CD8-positive, alpha-beta T cell (primary cell): ENCODE measurements at regions of chr16 and their contacts with region 1.

Region 1: DNA sequence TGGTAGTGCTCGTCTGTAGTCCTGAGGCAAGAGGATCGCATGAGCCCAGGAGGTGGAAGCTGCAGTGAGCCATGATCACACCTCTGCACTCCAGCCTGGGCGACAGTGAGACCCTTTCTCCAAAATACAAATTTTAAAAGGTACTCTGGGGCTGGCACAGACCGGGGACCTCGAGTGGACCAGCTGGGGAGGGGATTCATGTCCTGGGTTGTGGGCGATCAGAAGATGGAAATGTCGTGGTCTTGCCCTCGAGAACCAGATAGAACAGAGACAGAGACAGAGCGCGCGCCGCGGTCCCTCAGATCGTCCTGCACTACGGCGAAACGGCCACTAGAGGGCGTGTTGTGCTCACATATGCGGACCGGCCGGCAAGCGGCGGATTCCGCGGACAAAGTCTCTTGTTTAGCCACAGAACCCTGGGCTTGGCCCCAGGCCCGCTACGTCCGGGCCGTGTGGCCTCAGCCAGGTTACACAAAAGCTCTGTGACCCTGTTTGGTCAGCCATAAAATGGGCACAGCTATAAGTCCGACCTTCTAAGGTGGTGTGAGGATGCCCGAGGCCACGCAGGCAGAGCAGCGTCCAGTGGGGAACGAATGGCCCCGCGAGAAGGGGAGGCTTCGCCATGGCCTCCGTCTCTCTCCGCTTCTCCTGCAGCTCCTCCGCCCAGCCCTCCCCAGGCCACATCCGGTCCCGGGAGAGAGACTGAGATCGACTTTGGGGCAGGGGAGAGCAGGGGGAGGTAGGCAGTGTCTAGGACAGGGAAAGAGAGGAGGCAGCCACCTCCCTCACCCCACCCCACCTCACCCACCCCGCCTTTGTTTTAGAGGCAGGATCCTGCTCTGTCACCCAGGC is 14.6 kb upstream of the SBK1 start:
- DNase-seq: peak; percentile 72 to 95 (median 88)
- ATAC-seq: peak; percentile 80
- H3K4me3 ChIP-seq: peak overlapping the region; percentile 60 to 90
- H3K4me3 Mint-ChIP-seq: peak overlapping the region; percentile 81
- H3K27ac ChIP-seq: peak overlapping the region; percentile 57 to 68
- H3K27ac Mint-ChIP-seq: peak overlapping the region; percentile 95
- H3K4me1 ChIP-seq: peaks cover 45% of the 10 kb centered on the region
- H3K4me1 Mint-ChIP-seq: peaks cover 40% of the 10 kb centered on the region
- H3K27me3 ChIP-seq: no peaks in the 10 kb centered on the region
- H3K27me3 Mint-ChIP-seq: no peaks in the 10 kb centered on the region
- CTCF ChIP-seq: peak; percentile 95

Region 2: DNA sequence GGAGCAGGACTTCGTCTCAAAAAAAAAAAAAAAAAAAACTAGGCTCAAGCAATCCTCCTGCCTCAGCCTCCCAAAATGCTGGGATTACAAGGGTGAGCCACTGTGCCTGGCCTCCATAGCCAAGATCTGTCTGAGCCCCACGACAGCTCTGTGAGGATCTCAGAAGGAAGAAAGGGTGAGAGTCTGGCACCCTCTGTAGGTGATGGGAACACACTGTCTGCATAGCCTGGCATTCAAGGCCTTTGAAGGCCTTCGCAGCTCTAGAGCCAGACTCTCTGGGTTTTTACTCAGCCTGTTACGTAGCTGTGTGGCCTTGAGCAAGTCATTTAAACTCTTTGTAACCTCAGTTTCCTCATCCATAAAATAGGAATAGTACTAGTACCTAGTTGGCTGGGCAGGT is 59.7 kb before region 1 on chr16:
- CTCF ChIA-PET with region 1: interaction called, 13 read pairs
- POLR2A ChIA-PET with region 1: interaction called, 3 read pairs
- intact Hi-C with region 1: loop called in 1 of 2 experiments (anchors 2 kb)
- DNase-seq: peak; percentile 40 to 89 (median 65)
- ATAC-seq: peak; percentile 100
- H3K4me3 ChIP-seq: no peak overlapping the region
- H3K4me3 Mint-ChIP-seq: no peak overlapping the region
- H3K27ac ChIP-seq: no peak overlapping the region
- H3K27ac Mint-ChIP-seq: peak overlapping the region; percentile 71
- H3K4me1 ChIP-seq: no peaks in the 10 kb centered on the region
- H3K4me1 Mint-ChIP-seq: peaks cover 5% of the 10 kb centered on the region
- H3K27me3 ChIP-seq: no peaks in the 10 kb centered on the region
- H3K27me3 Mint-ChIP-seq: no peaks in the 10 kb centered on the region
- CTCF ChIP-seq: peak; percentile 66

Region 3: GRCh38 chr16:28267356-28267755 is 10.4 kb before region 1 on chr16:
- CTCF ChIA-PET with region 1: interaction called, 13 read pairs
- POLR2A ChIA-PET with region 1: interaction called, 5 read pairs
- intact Hi-C with region 1: no loop called
- DNase-seq: no peak
- ATAC-seq: no peak
- H3K4me3 ChIP-seq: no peak overlapping the region
- H3K4me3 Mint-ChIP-seq: no peak overlapping the region
- H3K27ac ChIP-seq: no peak overlapping the region
- H3K27ac Mint-ChIP-seq: no peak overlapping the region
- H3K4me1 ChIP-seq: peaks cover 10% of the 10 kb centered on the region
- H3K4me1 Mint-ChIP-seq: peaks cover 23% of the 10 kb centered on the region
- H3K27me3 ChIP-seq: no peaks in the 10 kb centered on the region
- H3K27me3 Mint-ChIP-seq: peaks cover 3% of the 10 kb centered on the region
- CTCF ChIP-seq: no peak

Region 4: GRCh38 chr16:28304214-28304613 is 26.5 kb after region 1 on chr16:
- CTCF ChIA-PET with region 1: interaction called, 431 read pairs
- POLR2A ChIA-PET with region 1: interaction called, 53 read pairs
- intact Hi-C with region 1: no loop called
- DNase-seq: peak in 1 of 9 experiments; percentile 21
- ATAC-seq: peak; percentile 54
- H3K4me3 ChIP-seq: no peak overlapping the region
- H3K4me3 Mint-ChIP-seq: no peak overlapping the region
- H3K27ac ChIP-seq: no peak overlapping the region
- H3K27ac Mint-ChIP-seq: no peak overlapping the region
- H3K4me1 ChIP-seq: peaks cover 60% of the 10 kb centered on the region
- H3K4me1 Mint-ChIP-seq: peaks cover 68% of the 10 kb centered on the region
- H3K27me3 ChIP-seq: no peaks in the 10 kb centered on the region
- H3K27me3 Mint-ChIP-seq: no peaks in the 10 kb centered on the region
- CTCF ChIP-seq: no peak

Region 5: GRCh38 chr16:28317040-28317880 is 39.5 kb after region 1 on chr16:
- CTCF ChIA-PET with region 1: interaction called, 431 read pairs
- POLR2A ChIA-PET with region 1: interaction called, 53 read pairs
- intact Hi-C with region 1: loop called (anchors 1 kb)
- DNase-seq: peak; percentile 48 to 86 (median 77)
- ATAC-seq: peak; percentile 78
- H3K4me3 ChIP-seq: no peak overlapping the region
- H3K4me3 Mint-ChIP-seq: peak overlapping the region; percentile 41
- H3K27ac ChIP-seq: peak overlapping the region in 1 of 2 experiments; percentile 42
- H3K27ac Mint-ChIP-seq: peak overlapping the region; percentile 84
- H3K4me1 ChIP-seq: peaks cover 48% of the 10 kb centered on the region
- H3K4me1 Mint-ChIP-seq: peaks cover 43% of the 10 kb centered on the region
- H3K27me3 ChIP-seq: no peaks in the 10 kb centered on the region
- H3K27me3 Mint-ChIP-seq: no peaks in the 10 kb centered on the region
- CTCF ChIP-seq: peak; percentile 76

Region 6: DNA sequence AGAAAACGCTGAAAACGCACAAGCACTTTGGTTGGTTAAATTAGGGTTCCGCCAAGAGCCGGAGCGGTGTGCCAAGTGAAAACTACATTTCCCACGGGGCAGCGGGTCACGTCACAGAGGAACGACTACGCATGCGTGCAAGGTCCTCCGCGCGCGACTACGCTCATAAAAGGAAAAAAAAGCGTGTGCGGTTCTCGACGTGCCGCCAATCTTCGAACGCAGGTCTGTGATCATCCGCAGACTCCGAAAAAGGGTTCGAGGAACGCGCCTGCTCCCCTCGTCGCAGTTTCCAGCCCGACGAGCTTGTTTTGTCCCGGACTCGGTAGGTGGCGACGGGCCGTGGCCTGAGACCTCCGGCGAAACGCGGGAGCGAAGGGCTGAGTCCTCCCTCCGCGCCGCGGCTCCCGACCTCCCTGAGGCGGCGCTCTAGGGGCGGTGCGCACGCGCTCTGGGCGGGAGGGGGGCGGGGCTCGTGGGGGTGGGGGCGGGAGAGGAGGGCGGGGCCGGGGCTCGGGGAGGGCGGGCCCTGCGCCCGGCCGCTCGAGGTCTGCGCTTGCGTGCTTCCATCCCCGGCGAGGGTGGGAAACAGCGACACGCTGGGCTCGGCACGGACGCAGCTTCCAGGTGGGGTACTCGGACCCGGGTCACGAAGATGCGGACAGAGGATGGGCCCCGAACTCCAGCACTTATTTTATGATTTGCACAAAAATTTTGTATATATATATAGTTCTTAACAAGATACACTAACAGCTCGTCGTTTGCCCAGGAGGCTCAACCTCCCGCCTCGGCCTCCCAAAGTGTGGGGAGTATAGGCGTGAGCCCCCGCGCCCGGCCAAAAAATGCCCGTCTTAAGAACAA is 276.2 kb after region 1 on chr16 and contains the start of gene SGF29:
- CTCF ChIA-PET with region 1: no interaction called
- POLR2A ChIA-PET with region 1: interaction called, 3 read pairs
- intact Hi-C with region 1: loop called in 1 of 2 experiments (anchors 2 kb)
- DNase-seq: peak; percentile 86 to 97 (median 93)
- ATAC-seq: peak; percentile 93
- H3K4me3 ChIP-seq: peak within 1 kb of the TSS; percentile 87 to 99
- H3K4me3 Mint-ChIP-seq: peak within 1 kb of the TSS; percentile 92
- H3K27ac ChIP-seq: peak within 1 kb of the TSS; percentile 95 to 98
- H3K27ac Mint-ChIP-seq: peak within 1 kb of the TSS; percentile 98
- H3K4me1 ChIP-seq: peaks cover 18% of the 10 kb centered on the region
- H3K4me1 Mint-ChIP-seq: peaks cover 36% of the 10 kb centered on the region
- H3K27me3 ChIP-seq: no peaks in the 10 kb centered on the region
- H3K27me3 Mint-ChIP-seq: no peaks in the 10 kb centered on the region
- CTCF ChIP-seq: no peak
- total RNA-seq, gene SGF29: 41.1 to 44.5 TPM